ENCODE measurements at regions of chr2 and their contacts with region 1.

Region 1: GRCh38 chr2:85707304-85707703 is 13.1 kb downstream of the GNLY start:
- DNase-seq: peak; percentile 79
- H3K4me3 Mint-ChIP-seq: no peak overlapping the region
- H3K27ac Mint-ChIP-seq: no peak overlapping the region
- H3K4me1 Mint-ChIP-seq: peaks cover 40% of the 10 kb centered on the region
- H3K27me3 Mint-ChIP-seq: no peaks in the 10 kb centered on the region
- CTCF ChIP-seq: peak; percentile 75

Region 2: DNA sequence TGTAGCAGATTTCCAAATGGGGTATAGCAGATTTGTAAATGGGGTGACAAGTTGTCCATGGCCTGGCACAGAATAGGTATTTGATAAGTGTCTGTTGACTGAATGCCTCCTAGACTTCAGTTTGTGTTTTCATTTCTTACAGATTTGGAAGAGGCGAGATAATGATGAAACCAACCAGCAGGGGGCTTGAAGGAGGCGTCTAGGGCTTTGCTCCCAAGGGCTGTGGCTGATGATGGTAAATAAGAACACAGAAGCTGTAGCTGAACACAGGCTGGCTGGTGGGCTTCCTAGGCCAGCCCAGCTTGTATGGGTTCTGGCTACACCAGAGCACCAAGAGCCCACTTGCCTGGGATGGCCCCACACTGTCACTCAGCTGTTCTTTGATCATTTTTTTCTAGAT is 58.7 kb before region 1 on chr2:
- CTCF ChIA-PET with region 1: no interaction called
- intact Hi-C with region 1: loop called (anchors 5 kb)
- DNase-seq: peak; percentile 41
- H3K4me3 Mint-ChIP-seq: no peak overlapping the region
- H3K27ac Mint-ChIP-seq: no peak overlapping the region
- H3K4me1 Mint-ChIP-seq: no peaks in the 10 kb centered on the region
- H3K27me3 Mint-ChIP-seq: no peaks in the 10 kb centered on the region
- CTCF ChIP-seq: peak; percentile 49

Region 3: GRCh38 chr2:85678794-85679672 is 28.3 kb before region 1 on chr2:
- CTCF ChIA-PET with region 1: interaction called, 9 read pairs
- intact Hi-C with region 1: loop called (anchors 1 kb)
- DNase-seq: peak; percentile 93
- H3K4me3 Mint-ChIP-seq: no peak overlapping the region
- H3K27ac Mint-ChIP-seq: no peak overlapping the region
- H3K4me1 Mint-ChIP-seq: peaks cover 14% of the 10 kb centered on the region
- H3K27me3 Mint-ChIP-seq: peaks cover 15% of the 10 kb centered on the region
- CTCF ChIP-seq: peak; percentile 92

Measured in Calu3 (cell line).